Colonic mucosa (tissue), 4 donors: ENCODE measurements at regions of chr3 and their contacts with region 1.

Region 1: GRCh38 chr3:73624821-73625665 is at the start of gene PDZRN3:
- DNase-seq: peak; percentile 84
- H3K4me3 ChIP-seq: peak within 1 kb of the TSS; percentile 44
- H3K27ac ChIP-seq: peak within 1 kb of the TSS; percentile 56
- H3K4me1 ChIP-seq: no peaks in the 10 kb centered on the region
- H3K27me3 ChIP-seq: no peaks in the 10 kb centered on the region
- CTCF ChIP-seq: no peak
- total RNA-seq, gene PDZRN3: 13.6 to 19.1 TPM

Region 2: DNA sequence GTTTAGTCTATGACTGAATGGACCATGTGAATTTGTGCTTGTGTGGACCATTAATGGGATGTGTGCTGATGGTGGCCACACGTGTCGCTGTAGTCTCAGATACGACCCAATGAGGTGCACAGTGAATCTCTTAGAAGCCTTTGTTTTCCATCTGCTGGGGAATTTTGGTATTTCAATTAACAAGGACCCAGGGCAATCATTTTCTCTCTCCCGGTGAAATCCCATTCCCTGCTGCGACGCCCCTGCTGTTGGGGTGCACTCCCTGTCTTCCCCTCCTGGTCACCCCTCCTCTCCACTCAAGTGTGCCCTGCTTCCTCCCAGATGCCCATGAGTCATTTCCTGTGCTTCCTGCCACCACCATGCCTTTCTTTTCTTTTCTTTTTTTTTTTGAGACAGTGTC is 530.9 kb before region 1 on chr3:
- intact Hi-C with region 1: loop called (anchors 10 kb)
- DNase-seq: no peak
- H3K4me3 ChIP-seq: no peak overlapping the region
- H3K27ac ChIP-seq: no peak overlapping the region
- H3K4me1 ChIP-seq: no peaks in the 10 kb centered on the region
- H3K27me3 ChIP-seq: no peaks in the 10 kb centered on the region
- CTCF ChIP-seq: no peak

Region 3: GRCh38 chr3:73508330-73508954 is 116.6 kb before region 1 on chr3:
- intact Hi-C with region 1: loop called (anchors 5 kb)
- DNase-seq: peak; percentile 80
- H3K4me3 ChIP-seq: no peak overlapping the region
- H3K27ac ChIP-seq: no peak overlapping the region
- H3K4me1 ChIP-seq: peaks cover 20% of the 10 kb centered on the region
- H3K27me3 ChIP-seq: no peaks in the 10 kb centered on the region
- CTCF ChIP-seq: peak; percentile 82

Region 4: DNA sequence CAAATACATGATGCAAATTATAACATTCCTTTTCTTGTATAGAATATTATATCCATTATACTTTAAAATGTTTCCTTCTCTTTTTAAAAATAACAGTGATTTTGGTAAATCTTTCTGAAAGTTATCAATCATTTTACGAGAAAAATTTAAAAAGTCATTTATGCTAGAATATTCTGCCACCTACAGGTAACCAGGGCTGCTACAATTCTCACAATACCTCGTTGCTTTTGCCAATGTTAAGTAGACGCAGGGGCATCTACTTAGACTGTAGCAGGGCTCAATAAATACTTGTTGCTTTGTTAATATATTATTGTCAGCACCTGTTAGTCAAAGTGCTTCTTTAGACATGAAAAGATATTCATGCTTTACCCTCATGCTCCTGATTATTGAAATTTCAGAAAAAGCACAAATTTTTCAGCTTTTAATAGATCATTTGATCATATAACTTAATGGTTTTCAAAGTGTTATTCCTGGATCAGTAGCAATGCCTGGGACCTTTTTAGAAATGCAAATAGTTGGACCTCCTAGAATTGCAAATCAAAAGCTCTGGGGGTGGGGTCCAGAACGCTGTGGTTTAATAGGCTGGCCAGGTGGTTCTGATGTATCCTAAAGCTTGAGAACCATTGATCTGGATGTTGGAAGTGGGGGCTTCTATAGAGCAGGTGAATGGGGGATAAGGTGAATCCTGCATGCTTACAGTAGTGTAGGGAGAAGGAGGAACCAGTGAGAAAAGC is 223.3 kb after region 1 on chr3:
- intact Hi-C with region 1: loop called (anchors 10 kb)
- DNase-seq: no peak
- H3K4me3 ChIP-seq: no peak overlapping the region
- H3K27ac ChIP-seq: no peak overlapping the region
- H3K4me1 ChIP-seq: no peaks in the 10 kb centered on the region
- H3K27me3 ChIP-seq: no peaks in the 10 kb centered on the region
- CTCF ChIP-seq: peak; percentile 61

Region 5: DNA sequence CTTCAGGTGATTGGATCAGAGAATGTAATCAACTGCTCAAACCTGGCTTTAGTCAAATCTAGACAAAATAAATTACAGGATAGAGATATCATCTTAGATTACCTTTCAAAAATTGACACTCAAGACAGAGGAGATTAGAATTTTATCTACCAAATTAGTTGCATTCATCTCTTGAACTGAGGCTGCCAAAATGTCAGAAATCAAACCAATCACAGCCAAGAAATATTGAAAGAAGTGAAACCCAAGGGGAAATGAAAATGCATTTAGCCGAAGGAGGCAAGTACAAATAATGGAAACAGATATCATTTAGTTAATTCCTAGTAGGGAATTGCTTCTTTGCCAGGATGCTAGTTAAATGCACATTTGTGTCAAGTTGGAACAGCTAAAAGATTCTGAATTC is 260.8 kb after region 1 on chr3:
- intact Hi-C with region 1: no loop called
- DNase-seq: no peak
- H3K4me3 ChIP-seq: no peak overlapping the region
- H3K27ac ChIP-seq: no peak overlapping the region
- H3K4me1 ChIP-seq: no peaks in the 10 kb centered on the region
- H3K27me3 ChIP-seq: no peaks in the 10 kb centered on the region
- CTCF ChIP-seq: no peak